ENCODE measurements at regions of chr15 and their contacts with region 1.

Region 1: DNA sequence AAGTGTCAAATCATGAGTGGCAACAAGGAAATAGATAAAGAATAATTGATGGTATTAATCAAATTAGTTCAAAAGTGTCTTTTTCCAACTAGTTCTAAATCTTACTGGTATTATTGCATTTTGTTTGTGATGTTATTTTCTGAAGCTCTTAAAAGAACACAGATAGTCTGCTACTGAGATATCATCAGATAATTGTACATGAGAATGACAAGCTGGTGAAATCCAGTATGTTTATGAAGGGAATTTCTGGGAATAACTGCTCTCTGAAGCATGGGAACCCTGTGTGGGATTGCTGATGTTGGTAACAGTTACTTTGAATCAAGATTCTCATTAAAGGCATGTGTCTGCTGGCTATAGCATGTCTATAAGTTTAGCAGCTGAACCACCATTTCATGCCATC is 190.3 kb upstream of the CDIN1 start:
- DNase-seq: no peak
- ATAC-seq: no peak
- H3K4me3 ChIP-seq: no peak overlapping the region
- H3K27ac ChIP-seq: no peak overlapping the region
- H3K4me1 ChIP-seq: no peaks in the 10 kb centered on the region
- H3K27me3 ChIP-seq: no peaks in the 10 kb centered on the region
- CTCF ChIP-seq: no peak

Region 2: DNA sequence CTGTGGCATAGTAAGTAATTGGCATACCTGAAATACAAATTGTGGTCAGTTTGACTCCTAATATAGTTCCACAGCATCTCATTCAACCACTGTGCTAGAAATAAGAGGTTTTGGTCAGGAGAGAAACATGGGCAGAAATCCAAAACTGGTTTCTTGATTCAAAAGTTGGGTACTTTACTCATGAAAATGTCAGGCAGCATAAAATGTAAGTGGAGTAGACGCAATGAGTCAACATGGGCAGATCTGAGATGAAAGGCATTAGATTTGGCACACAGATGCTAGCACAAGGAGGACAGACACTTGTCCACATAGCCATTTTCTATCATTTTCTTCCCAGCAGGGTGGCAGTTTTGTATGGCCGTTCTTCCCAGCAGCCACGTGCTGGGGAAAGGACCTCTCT is 65.5 kb before region 1 on chr15:
- intact Hi-C with region 1: loop called in 1 of 10 experiments (anchors 10 kb)
- DNase-seq: no peak
- ATAC-seq: no peak
- H3K4me3 ChIP-seq: no peak overlapping the region
- H3K27ac ChIP-seq: no peak overlapping the region
- H3K4me1 ChIP-seq: no peaks in the 10 kb centered on the region
- H3K27me3 ChIP-seq: no peaks in the 10 kb centered on the region
- CTCF ChIP-seq: no peak

Region 3: DNA sequence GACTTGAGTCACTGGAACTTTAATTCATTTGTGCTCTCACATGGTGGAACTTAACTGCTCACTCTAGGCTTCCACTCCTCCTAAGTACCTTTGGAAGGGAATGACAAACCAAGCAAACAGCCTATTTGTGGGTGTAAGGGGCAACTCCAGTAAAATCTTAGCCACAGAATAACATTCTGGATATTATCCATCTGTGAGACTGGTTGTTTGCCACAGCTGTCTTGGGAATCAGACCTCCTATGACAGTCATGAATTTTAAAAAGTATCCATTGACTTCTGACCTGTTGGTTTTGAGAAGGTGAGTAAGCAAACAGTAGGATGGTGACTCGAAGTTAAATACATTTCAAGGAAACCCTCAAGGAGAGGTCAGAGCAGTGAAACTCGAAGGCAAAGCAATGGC is 43.1 kb after region 1 on chr15:
- intact Hi-C with region 1: no loop called
- DNase-seq: no peak
- ATAC-seq: no peak
- H3K4me3 ChIP-seq: no peak overlapping the region
- H3K27ac ChIP-seq: no peak overlapping the region
- H3K4me1 ChIP-seq: peaks cover 0 to 8% (median 0%) of the 10 kb centered on the region in 9 donors
- H3K27me3 ChIP-seq: no peaks in the 10 kb centered on the region
- CTCF ChIP-seq: no peak

Region 4: DNA sequence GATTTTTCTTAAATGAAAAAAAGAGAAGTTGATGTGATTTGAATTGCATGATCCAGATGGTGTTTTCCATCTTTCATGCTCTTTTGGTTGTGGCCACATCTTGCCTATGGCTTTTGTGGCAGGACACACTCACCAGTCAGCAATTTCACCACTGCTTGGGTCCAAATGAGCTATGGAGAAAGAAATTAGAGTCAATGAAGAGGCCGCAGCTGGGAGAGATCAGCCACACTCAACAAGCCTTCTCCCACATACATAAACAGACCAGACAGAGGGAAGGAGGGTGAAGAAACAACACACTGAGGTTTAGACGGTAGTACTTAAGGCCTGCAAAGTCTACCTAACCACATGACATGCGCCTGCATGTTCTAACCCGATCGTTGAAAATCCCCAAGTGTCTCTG is 79.6 kb after region 1 on chr15:
- intact Hi-C with region 1: no loop called
- DNase-seq: no peak
- ATAC-seq: peak in 2 of 8 donors; percentile 50 to 52
- H3K4me3 ChIP-seq: no peak overlapping the region
- H3K27ac ChIP-seq: no peak overlapping the region
- H3K4me1 ChIP-seq: no peaks in the 10 kb centered on the region
- H3K27me3 ChIP-seq: no peaks in the 10 kb centered on the region
- CTCF ChIP-seq: no peak

Measured in heart right ventricle (tissue), 16 donors.